CD8-positive, alpha-beta memory T cell (primary cell): ENCODE measurements at regions of chr22 and their contacts with region 1.

Region 1: GRCh38 chr22:50507991-50508884 is at the start of gene NCAPH2:
- DNase-seq: peak in 4 of 5 donors; percentile 96 to 98 (median 96)
- H3K4me3 ChIP-seq: peak within 1 kb of the TSS; percentile 80
- H3K4me3 Mint-ChIP-seq: peak within 1 kb of the TSS; percentile 92 to 99 (median 94)
- H3K27ac ChIP-seq: peak within 1 kb of the TSS; percentile 88
- H3K27ac Mint-ChIP-seq: peak within 1 kb of the TSS; percentile 93 to 100 (median 98)
- H3K4me1 ChIP-seq: peaks cover 23% of the 10 kb centered on the region
- H3K4me1 Mint-ChIP-seq: peaks cover 17 to 32% (median 19%) of the 10 kb centered on the region in 3 donors
- H3K27me3 ChIP-seq: no peaks in the 10 kb centered on the region
- H3K27me3 Mint-ChIP-seq: peaks cover 0 to 1% of the 10 kb centered on the region in 2 donors
- total RNA-seq, gene NCAPH2: 155 to 165 TPM

Region 2: GRCh38 chr22:50244420-50245213 is 263.6 kb before region 1 on chr22 and contains the start of gene TUBGCP6:
- CTCF ChIA-PET with region 1: interaction called, 3 read pairs
- POLR2A ChIA-PET with region 1: interaction called, 10 read pairs
- DNase-seq: peak; percentile 89 to 92 (median 90)
- H3K4me3 ChIP-seq: peak within 1 kb of the TSS; percentile 77
- H3K4me3 Mint-ChIP-seq: peak within 1 kb of the TSS; percentile 84 to 100 (median 98)
- H3K27ac ChIP-seq: peak within 1 kb of the TSS; percentile 99
- H3K27ac Mint-ChIP-seq: peak within 1 kb of the TSS; percentile 94 to 100 (median 98)
- H3K4me1 ChIP-seq: peaks cover 54% of the 10 kb centered on the region
- H3K4me1 Mint-ChIP-seq: peaks cover 34 to 66% (median 41%) of the 10 kb centered on the region in 3 donors
- H3K27me3 ChIP-seq: no peaks in the 10 kb centered on the region
- H3K27me3 Mint-ChIP-seq: peaks cover 0 to 1% of the 10 kb centered on the region in 2 donors
- total RNA-seq, gene TUBGCP6: 51.4 to 52.2 TPM

Region 3: GRCh38 chr22:50469377-50470305 is 38.6 kb before region 1 on chr22:
- CTCF ChIA-PET with region 1: interaction called, 4 read pairs
- POLR2A ChIA-PET with region 1: interaction called, 15 read pairs
- DNase-seq: peak; percentile 97 to 100 (median 98)
- H3K4me3 ChIP-seq: peak overlapping the region; percentile 63
- H3K4me3 Mint-ChIP-seq: peak overlapping the region; percentile 79 to 98 (median 83)
- H3K27ac ChIP-seq: peak overlapping the region; percentile 51
- H3K27ac Mint-ChIP-seq: peak overlapping the region; percentile 78 to 99 (median 97)
- H3K4me1 ChIP-seq: peaks cover 59% of the 10 kb centered on the region
- H3K4me1 Mint-ChIP-seq: peaks cover 60 to 78% (median 64%) of the 10 kb centered on the region in 3 donors
- H3K27me3 ChIP-seq: no peaks in the 10 kb centered on the region
- H3K27me3 Mint-ChIP-seq: no peaks in the 10 kb centered on the region

Region 4: GRCh38 chr22:50485201-50486131 is 22.8 kb before region 1 on chr22:
- CTCF ChIA-PET with region 1: no interaction called
- POLR2A ChIA-PET with region 1: no interaction called
- DNase-seq: no peak
- H3K4me3 ChIP-seq: no peak overlapping the region
- H3K4me3 Mint-ChIP-seq: no peak overlapping the region
- H3K27ac ChIP-seq: no peak overlapping the region
- H3K27ac Mint-ChIP-seq: peak overlapping the region in 1 of 8 donors; percentile 30
- H3K4me1 ChIP-seq: peaks cover under 1% of the 10 kb centered on the region
- H3K4me1 Mint-ChIP-seq: no peaks in the 10 kb centered on the region
- H3K27me3 ChIP-seq: no peaks in the 10 kb centered on the region
- H3K27me3 Mint-ChIP-seq: peaks cover 4 to 11% of the 10 kb centered on the region in 2 donors

Region 5: DNA sequence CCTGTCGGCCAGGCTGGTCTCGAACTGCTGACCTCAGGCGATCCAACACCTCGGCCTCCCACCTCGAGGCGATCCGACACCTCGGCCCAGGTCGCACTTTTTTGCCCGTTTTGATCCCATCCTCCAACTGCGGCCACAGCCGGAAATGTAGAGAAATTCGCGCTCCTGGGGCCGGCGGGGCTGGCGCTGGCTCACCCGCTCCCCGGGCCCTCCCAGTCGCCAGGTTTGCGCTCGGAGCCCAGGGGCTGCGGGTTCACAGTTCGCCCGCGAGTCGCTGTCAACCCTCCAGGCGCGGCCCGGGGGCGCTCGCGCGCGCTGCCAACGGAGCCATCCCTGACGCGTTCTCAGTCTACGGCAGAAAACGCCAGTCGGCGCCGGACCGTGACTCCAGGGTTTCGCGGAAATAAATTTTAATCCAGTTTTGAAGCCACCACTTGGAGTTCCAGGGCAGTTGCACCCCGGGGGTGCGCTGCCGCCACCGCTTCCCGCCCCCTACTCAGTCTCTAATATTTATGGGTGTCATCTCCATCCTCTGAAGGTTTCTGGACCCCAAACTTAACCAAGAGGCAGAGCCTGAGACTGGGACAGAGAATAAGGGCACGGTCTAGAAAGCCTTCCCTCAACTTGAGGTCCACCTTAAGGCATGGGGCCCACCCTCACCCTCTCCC is 36.0 kb after region 1 on chr22:
- CTCF ChIA-PET with region 1: interaction called, 8 read pairs
- POLR2A ChIA-PET with region 1: interaction called, 21 read pairs
- DNase-seq: peak; percentile 72 to 87 (median 78)
- H3K4me3 ChIP-seq: peak overlapping the region; percentile 77
- H3K4me3 Mint-ChIP-seq: peak overlapping the region; percentile 60 to 85 (median 71)
- H3K27ac ChIP-seq: peak overlapping the region; percentile 33
- H3K27ac Mint-ChIP-seq: peak overlapping the region; percentile 74 to 99 (median 91)
- H3K4me1 ChIP-seq: peaks cover 41% of the 10 kb centered on the region
- H3K4me1 Mint-ChIP-seq: peaks cover 39 to 55% (median 44%) of the 10 kb centered on the region in 3 donors
- H3K27me3 ChIP-seq: no peaks in the 10 kb centered on the region
- H3K27me3 Mint-ChIP-seq: no peaks in the 10 kb centered on the region

Region 6: GRCh38 chr22:50562523-50563412 is 54.5 kb after region 1 on chr22 and contains the start of gene SYCE3:
- CTCF ChIA-PET with region 1: interaction called, 13 read pairs
- POLR2A ChIA-PET with region 1: interaction called, 7 read pairs
- DNase-seq: peak; percentile 95 to 98 (median 97)
- H3K4me3 ChIP-seq: peak within 1 kb of the TSS; percentile 85
- H3K4me3 Mint-ChIP-seq: peak within 1 kb of the TSS; percentile 81 to 98 (median 92)
- H3K27ac ChIP-seq: peak within 1 kb of the TSS; percentile 29
- H3K27ac Mint-ChIP-seq: peak within 1 kb of the TSS; percentile 74 to 98 (median 90)
- H3K4me1 ChIP-seq: no peaks in the 10 kb centered on the region
- H3K4me1 Mint-ChIP-seq: peaks cover 18 to 21% (median 19%) of the 10 kb centered on the region in 3 donors
- H3K27me3 ChIP-seq: no peaks in the 10 kb centered on the region
- H3K27me3 Mint-ChIP-seq: peaks cover 0 to 4% of the 10 kb centered on the region in 2 donors
- total RNA-seq, gene SYCE3: not detected